ENCODE measurements at regions of chr12 and their contacts with region 1.

Region 1: DNA sequence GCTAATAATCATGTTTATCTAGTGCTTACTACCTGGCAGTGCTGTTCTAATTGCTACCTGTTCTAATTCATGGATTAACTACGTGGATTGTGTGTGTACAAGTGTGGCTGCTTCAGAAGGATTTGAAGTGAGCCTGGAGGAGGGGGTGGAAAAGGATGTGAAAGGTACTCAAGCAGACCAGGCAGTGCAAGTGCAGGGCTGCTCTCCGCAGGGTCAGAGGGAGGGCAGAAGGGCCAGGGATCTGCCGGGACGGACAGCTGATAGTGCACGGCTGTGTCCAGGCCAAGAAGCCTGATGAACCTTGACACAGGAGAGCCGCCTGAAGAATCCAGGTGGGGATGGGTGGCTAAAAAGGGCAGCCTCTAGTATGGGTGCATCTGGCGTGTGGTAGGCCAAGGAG is 28.5 kb downstream of the PIWIL1 start:
- DNase-seq: no peak
- ATAC-seq: no peak
- H3K4me3 ChIP-seq: no peak overlapping the region
- H3K4me3 Mint-ChIP-seq: no peak overlapping the region
- H3K27ac ChIP-seq: no peak overlapping the region
- H3K27ac Mint-ChIP-seq: no peak overlapping the region
- H3K4me1 ChIP-seq: no peaks in the 10 kb centered on the region
- H3K4me1 Mint-ChIP-seq: no peaks in the 10 kb centered on the region
- H3K27me3 ChIP-seq: peaks cover 0 to 7% of the 10 kb centered on the region in 2 experiments
- H3K27me3 Mint-ChIP-seq: peaks cover 0 to 9% of the 10 kb centered on the region in 2 donors

Region 2: GRCh38 chr12:128652136-128652751 is 1713.9 kb before region 1 on chr12:
- CTCF ChIA-PET with region 1: interaction called in 1 of 2 experiments, 12 read pairs
- POLR2A ChIA-PET with region 1: no interaction called
- DNase-seq: no peak
- ATAC-seq: no peak
- H3K4me3 ChIP-seq: no peak overlapping the region
- H3K4me3 Mint-ChIP-seq: no peak overlapping the region
- H3K27ac ChIP-seq: no peak overlapping the region
- H3K27ac Mint-ChIP-seq: no peak overlapping the region
- H3K4me1 ChIP-seq: no peaks in the 10 kb centered on the region
- H3K4me1 Mint-ChIP-seq: no peaks in the 10 kb centered on the region
- H3K27me3 ChIP-seq: peaks cover 0 to 5% of the 10 kb centered on the region in 2 experiments
- H3K27me3 Mint-ChIP-seq: peaks cover 0 to 3% of the 10 kb centered on the region in 2 donors